ENCODE measurements at regions of chr20 and their contacts with region 1.

Region 1: DNA sequence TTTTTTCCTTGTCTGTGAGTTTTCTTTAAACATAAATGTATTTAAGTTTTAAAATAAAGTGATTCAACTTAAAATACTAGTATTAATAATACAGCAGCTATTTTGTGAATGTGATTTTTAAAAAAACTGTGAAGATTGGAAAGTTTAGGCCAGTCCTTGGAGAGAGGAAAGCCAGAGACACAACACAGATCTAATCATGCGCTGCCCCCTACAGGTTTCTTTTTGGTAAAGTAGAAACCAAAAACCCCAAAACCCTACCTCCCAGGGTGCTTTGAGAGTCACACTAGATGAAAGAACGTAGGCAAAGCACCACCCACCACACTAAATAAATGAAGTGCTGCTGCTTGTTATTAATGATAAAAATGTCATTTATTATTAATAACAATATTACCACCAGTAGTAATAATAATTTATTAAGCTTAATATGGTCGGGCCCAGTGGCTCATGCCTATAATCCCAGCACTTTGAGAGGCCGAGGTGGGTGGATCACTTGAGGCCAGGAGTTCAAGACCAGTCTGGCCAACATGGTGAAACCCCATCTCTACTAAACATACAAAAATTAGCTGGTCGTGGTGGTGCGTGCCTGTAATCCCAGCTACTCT is 33.7 kb downstream of the SLC9A8 start:
- DNase-seq: peak; percentile 79
- H3K4me3 Mint-ChIP-seq: no peak overlapping the region
- H3K27ac Mint-ChIP-seq: no peak overlapping the region
- H3K4me1 Mint-ChIP-seq: peaks cover 6% of the 10 kb centered on the region
- H3K27me3 Mint-ChIP-seq: no peaks in the 10 kb centered on the region
- CTCF ChIP-seq: peak; percentile 46

Region 2: GRCh38 chr20:49641683-49642656 is 204.3 kb before region 1 on chr20:
- CTCF ChIA-PET with region 1: interaction called, 12 read pairs
- POLR2A ChIA-PET with region 1: interaction called, 3 read pairs
- intact Hi-C with region 1: no loop called
- DNase-seq: no peak
- H3K4me3 Mint-ChIP-seq: no peak overlapping the region
- H3K27ac Mint-ChIP-seq: no peak overlapping the region
- H3K4me1 Mint-ChIP-seq: no peaks in the 10 kb centered on the region
- H3K27me3 Mint-ChIP-seq: no peaks in the 10 kb centered on the region
- CTCF ChIP-seq: no peak

Region 3: GRCh38 chr20:49668181-49668877 is 178.0 kb before region 1 on chr20:
- CTCF ChIA-PET with region 1: interaction called, 14 read pairs
- POLR2A ChIA-PET with region 1: interaction called, 3 read pairs
- intact Hi-C with region 1: no loop called
- DNase-seq: no peak
- H3K4me3 Mint-ChIP-seq: no peak overlapping the region
- H3K27ac Mint-ChIP-seq: no peak overlapping the region
- H3K4me1 Mint-ChIP-seq: peaks cover 21% of the 10 kb centered on the region
- H3K27me3 Mint-ChIP-seq: no peaks in the 10 kb centered on the region
- CTCF ChIP-seq: no peak

Region 4: GRCh38 chr20:49775229-49775693 is 71.0 kb before region 1 on chr20:
- CTCF ChIA-PET with region 1: interaction called, 11 read pairs
- POLR2A ChIA-PET with region 1: no interaction called
- intact Hi-C with region 1: no loop called
- DNase-seq: peak; percentile 98
- H3K4me3 Mint-ChIP-seq: no peak overlapping the region
- H3K27ac Mint-ChIP-seq: peak overlapping the region; percentile 79
- H3K4me1 Mint-ChIP-seq: peaks cover 40% of the 10 kb centered on the region
- H3K27me3 Mint-ChIP-seq: no peaks in the 10 kb centered on the region
- CTCF ChIP-seq: no peak

Region 5: GRCh38 chr20:49821870-49822331 is 24.4 kb before region 1 on chr20:
- CTCF ChIA-PET with region 1: interaction called, 11 read pairs
- POLR2A ChIA-PET with region 1: no interaction called
- intact Hi-C with region 1: no loop called
- DNase-seq: peak; percentile 59
- H3K4me3 Mint-ChIP-seq: no peak overlapping the region
- H3K27ac Mint-ChIP-seq: no peak overlapping the region
- H3K4me1 Mint-ChIP-seq: peaks cover 11% of the 10 kb centered on the region
- H3K27me3 Mint-ChIP-seq: no peaks in the 10 kb centered on the region
- CTCF ChIP-seq: no peak

Region 6: DNA sequence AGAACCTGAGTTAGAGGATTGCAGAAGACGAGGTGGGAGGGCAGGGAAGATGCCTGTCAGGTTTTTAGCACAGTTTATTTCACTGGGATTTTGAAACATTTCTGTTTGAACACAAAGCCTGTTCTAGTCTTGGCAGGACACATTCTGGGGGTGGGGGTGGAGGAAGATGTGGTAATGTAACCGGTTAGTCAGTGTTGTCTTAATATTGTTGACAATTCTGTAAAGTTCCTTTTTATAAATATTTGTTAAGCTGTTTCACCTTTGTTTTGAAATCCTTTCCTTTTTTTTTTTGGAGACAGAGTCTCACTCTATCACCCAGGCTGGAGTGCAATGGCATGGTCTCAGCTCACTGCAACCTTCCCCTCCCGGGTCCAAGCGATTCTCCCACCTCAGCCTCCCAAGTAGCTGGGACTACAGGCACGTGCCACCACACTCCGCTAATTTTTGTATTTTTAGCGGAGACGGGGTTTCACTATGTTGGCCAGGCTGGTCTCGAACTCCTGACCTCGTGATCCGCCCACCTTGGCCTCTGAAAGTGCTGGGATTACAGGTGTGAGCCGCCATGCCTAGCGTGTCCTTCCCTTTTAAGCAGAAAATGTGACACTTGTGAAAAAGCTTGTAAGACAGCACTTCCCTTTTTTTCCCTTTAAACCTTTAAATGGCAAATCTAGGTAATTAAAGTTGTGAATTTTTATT is 13.5 kb before region 1 on chr20:
- CTCF ChIA-PET with region 1: interaction called, 63 read pairs
- POLR2A ChIA-PET with region 1: interaction called, 6 read pairs
- intact Hi-C with region 1: no loop called
- DNase-seq: peak; percentile 77
- H3K4me3 Mint-ChIP-seq: no peak overlapping the region
- H3K27ac Mint-ChIP-seq: peak overlapping the region; percentile 59
- H3K4me1 Mint-ChIP-seq: peaks cover 14% of the 10 kb centered on the region
- H3K27me3 Mint-ChIP-seq: no peaks in the 10 kb centered on the region
- CTCF ChIP-seq: no peak

Region 7: DNA sequence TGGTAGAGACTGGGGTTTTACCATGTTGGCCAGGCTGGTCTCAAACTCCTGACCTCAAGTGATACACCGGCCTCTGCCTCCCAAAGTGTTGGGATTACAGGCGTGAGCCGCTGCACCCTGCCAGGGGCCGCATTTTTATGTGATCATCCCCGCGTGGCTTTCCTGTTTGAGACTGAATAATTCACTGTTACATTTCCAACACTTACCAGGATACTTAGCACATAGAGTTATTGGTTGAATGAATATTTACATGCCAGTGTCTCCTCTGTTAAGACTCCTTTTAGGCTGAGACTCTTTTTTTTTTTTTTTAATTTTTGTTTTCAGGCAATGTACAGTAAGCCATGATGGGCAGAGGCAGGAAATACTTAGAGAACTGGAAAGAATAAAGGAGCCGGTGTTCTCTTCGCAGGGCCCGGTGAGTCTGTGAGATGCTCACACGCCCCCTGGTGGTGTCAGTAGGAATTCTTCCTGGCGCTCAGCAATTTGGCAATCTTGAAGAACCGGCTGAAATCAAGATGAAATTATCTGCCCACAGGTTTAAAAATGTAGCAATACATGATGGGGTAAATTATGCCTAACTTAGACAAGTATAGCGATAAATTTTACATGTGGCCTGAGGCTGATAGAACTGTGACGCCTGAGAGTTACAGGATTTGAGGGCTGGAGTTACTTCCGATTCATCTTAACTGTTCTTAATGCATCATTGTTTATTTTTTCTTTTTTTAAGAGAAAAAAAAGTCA is 82.3 kb after region 1 on chr20:
- CTCF ChIA-PET with region 1: no interaction called
- POLR2A ChIA-PET with region 1: no interaction called
- intact Hi-C with region 1: loop called (anchors 1 kb)
- DNase-seq: peak; percentile 84
- H3K4me3 Mint-ChIP-seq: no peak overlapping the region
- H3K27ac Mint-ChIP-seq: no peak overlapping the region
- H3K4me1 Mint-ChIP-seq: no peaks in the 10 kb centered on the region
- H3K27me3 Mint-ChIP-seq: no peaks in the 10 kb centered on the region
- CTCF ChIP-seq: peak; percentile 80

Region 8: DNA sequence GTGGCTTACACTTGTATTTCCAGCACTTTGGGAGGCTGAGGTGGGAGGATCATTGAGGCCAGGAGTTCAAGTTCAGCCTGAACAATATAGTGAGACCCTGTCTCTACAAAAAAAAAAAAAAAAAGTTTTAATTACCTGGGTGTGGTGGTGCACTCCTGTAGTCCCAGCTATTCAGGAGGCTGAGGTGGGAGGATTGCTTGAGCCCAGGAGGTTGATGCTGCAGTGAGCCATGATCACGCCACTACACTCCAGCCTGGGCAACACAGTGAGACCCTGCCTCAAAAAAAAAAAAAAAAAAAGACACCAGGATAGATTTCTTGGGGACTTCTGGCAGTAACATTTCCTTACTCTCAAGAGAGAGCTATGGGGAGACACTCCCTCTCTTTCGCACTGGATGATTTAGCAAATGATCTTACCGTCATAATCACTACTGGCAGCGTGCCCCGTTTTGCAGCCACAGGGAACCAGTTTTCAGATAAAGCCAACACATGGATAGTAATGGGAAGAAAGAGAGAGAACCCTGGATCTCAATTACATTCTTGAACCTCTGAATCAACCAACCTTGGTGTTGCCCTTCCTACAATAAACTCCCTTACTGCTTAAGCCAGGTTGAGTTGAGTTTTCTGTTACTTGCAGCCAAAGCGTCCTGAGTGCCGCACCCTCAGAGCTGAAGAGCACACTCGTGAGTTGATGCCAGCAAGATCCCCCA is 645.8 kb after region 1 on chr20:
- CTCF ChIA-PET with region 1: no interaction called
- POLR2A ChIA-PET with region 1: no interaction called
- intact Hi-C with region 1: no loop called
- DNase-seq: peak; percentile 92
- H3K4me3 Mint-ChIP-seq: peak overlapping the region; percentile 60
- H3K27ac Mint-ChIP-seq: peak overlapping the region; percentile 92
- H3K4me1 Mint-ChIP-seq: peaks cover 39% of the 10 kb centered on the region
- H3K27me3 Mint-ChIP-seq: no peaks in the 10 kb centered on the region
- CTCF ChIP-seq: no peak